ENCODE measurements at regions of chr14 and their contacts with region 1.

Region 1: DNA sequence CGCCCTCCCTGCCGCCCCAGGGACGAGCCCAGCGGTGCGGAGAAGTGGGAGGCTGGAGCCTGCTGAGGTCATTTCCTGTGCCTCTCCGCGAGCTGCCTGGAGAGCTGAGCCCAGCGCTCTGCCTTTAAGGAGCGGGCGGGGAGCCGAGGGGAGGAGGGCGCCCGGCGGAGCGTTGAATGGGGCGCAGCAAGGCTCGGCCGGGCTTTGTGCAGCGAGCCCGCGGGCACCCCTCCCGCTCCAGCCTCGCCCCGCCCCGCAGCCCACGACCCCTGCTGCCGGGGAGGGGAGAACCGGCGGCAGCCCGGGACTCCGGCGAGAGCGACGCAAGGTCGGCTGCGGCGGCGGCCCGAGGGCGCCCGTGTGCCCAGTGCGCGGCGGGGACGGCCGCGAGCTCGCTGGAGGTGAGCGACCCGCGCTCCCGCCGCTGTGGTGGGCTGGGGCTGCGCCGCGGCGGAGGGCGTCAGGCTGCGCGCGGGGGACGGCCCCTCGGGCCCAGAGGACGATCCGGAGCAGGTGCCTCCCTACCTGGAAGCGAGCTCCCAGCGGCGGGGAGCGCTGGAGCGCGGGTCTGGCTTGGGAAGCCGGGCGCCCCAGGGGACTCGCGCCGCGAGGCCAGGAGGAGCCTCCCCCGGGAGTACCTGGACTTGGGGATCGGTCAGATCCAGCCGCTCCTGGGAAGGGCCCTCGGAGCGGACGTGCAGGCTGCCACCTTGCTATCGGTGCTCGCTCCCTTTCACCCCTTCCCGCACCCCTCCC is at the start of gene PLEKHH1:
- DNase-seq: peak; percentile 76
- H3K4me3 Mint-ChIP-seq: peak within 1 kb of the TSS; percentile 65
- H3K27ac Mint-ChIP-seq: no peak within 1 kb of the TSS
- H3K4me1 Mint-ChIP-seq: peaks cover 3% of the 10 kb centered on the region
- H3K27me3 Mint-ChIP-seq: peaks cover 16% of the 10 kb centered on the region
- total RNA-seq, gene PLEKHH1: 2.2 to 2.5 TPM

Region 2: GRCh38 chr14:67191768-67192290 is 341.3 kb before region 1 on chr14:
- CTCF ChIA-PET with region 1: no interaction called
- intact Hi-C with region 1: no loop called
- DNase-seq: no peak
- H3K4me3 Mint-ChIP-seq: no peak overlapping the region
- H3K27ac Mint-ChIP-seq: no peak overlapping the region
- H3K4me1 Mint-ChIP-seq: peaks cover 11% of the 10 kb centered on the region
- H3K27me3 Mint-ChIP-seq: peaks cover 3% of the 10 kb centered on the region

Region 3: GRCh38 chr14:67370830-67371229 is 162.3 kb before region 1 on chr14:
- CTCF ChIA-PET with region 1: no interaction called
- intact Hi-C with region 1: no loop called
- DNase-seq: no peak
- H3K4me3 Mint-ChIP-seq: no peak overlapping the region
- H3K27ac Mint-ChIP-seq: peak overlapping the region; percentile 7
- H3K4me1 Mint-ChIP-seq: peaks cover 52% of the 10 kb centered on the region
- H3K27me3 Mint-ChIP-seq: no peaks in the 10 kb centered on the region

Region 4: GRCh38 chr14:67483897-67484285 is 49.3 kb before region 1 on chr14:
- CTCF ChIA-PET with region 1: interaction called, 3 read pairs
- intact Hi-C with region 1: loop called (anchors 1 kb)
- DNase-seq: no peak
- H3K4me3 Mint-ChIP-seq: no peak overlapping the region
- H3K27ac Mint-ChIP-seq: no peak overlapping the region
- H3K4me1 Mint-ChIP-seq: peaks cover 52% of the 10 kb centered on the region
- H3K27me3 Mint-ChIP-seq: no peaks in the 10 kb centered on the region

Region 5: GRCh38 chr14:67500981-67501380 is 32.2 kb before region 1 on chr14:
- CTCF ChIA-PET with region 1: no interaction called
- intact Hi-C with region 1: no loop called
- DNase-seq: no peak
- H3K4me3 Mint-ChIP-seq: no peak overlapping the region
- H3K27ac Mint-ChIP-seq: no peak overlapping the region
- H3K4me1 Mint-ChIP-seq: peaks cover 8% of the 10 kb centered on the region
- H3K27me3 Mint-ChIP-seq: no peaks in the 10 kb centered on the region